Panc1 (cell line): ENCODE measurements at regions of chr11 and their contacts with region 1.

Region 1: DNA sequence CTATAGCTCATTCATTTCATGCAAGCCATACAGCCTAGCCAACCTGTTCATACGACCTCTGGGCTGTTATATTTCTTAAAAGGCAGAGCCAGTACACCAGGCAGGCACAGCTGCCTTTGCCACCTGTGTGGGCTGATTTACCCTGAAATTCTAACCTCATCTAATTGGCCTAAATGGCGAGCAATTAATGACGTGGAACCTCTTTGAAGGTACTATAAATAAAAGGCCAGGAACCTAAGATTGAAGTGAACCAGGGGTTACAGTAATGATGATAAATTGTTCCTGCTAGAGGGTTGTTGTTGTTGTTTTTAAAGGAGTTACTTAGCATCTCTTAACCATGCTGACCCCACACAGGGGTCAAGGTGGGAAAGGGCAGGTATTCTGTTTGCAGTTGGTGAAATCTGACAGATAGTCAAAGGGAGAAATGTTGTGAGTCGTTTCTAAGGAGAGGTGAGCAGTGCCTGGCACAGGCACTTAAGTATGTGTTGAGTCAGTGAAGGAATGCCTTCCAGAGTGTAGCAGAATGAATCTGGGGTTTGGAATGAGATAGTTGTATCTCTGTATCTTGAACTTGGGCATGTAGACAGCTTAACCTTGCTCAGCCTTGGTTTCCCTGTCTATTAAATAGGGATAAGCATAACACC is 213.5 kb upstream of the NAV2 start:
- DNase-seq: no peak
- ATAC-seq: no peak
- H3K4me3 ChIP-seq: no peak overlapping the region
- H3K27ac ChIP-seq: no peak overlapping the region
- H3K4me1 ChIP-seq: no peaks in the 10 kb centered on the region
- H3K27me3 ChIP-seq: peaks cover 6% of the 10 kb centered on the region; the same call in 1 of the 2 replicates
- CTCF ChIP-seq: no peak

Region 2: GRCh38 chr11:19079643-19080440 is 419.3 kb before region 1 on chr11:
- CTCF ChIA-PET with region 1: no interaction called
- POLR2A ChIA-PET with region 1: no interaction called
- in situ Hi-C with region 1: no loop called
- intact Hi-C with region 1: no loop called
- DNase-seq: no peak
- ATAC-seq: no peak
- H3K4me3 ChIP-seq: no peak overlapping the region
- H3K27ac ChIP-seq: no peak overlapping the region
- H3K4me1 ChIP-seq: no peaks in the 10 kb centered on the region; the same call in 1 of the 2 replicates
- H3K27me3 ChIP-seq: peaks cover 8% of the 10 kb centered on the region; the same call in 1 of the 2 replicates
- CTCF ChIP-seq: no peak

Region 3: DNA sequence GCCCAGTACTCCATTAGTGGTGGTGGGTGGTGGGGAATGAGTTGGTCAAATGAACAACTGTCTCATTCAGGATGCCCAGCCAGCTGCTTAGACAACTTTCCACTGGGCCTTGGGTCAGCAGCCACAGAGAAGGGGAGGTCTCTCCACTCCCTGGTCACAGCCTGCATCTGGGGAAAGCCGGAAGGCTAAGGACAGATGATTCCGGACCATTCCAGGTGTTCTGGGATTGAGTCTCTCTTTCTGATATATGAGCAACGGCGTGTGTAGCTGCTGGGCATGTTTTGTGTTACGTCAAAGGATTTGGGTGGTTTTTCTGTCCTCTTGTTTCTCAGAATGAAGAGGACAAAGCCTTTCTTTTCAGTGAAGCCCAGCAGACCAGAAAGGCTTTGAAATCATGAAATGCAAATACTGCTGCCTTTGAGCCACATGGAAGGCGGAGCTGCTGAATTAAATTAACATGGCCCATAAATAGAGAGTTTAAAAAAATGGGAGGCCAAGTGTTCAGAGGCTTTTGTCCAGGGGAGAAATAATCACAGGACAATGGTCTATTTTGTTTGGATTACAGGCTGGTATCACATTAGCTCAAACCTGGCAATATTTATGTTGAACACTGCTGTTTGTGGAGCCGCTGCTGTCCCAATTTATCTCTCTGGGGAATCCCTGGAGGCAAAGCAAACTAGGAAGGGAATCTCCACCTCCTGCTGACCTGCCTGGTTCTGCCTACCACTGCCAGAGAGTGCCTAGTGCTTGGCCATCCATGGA is 24.0 kb before region 1 on chr11:
- CTCF ChIA-PET with region 1: no interaction called
- POLR2A ChIA-PET with region 1: no interaction called
- in situ Hi-C with region 1: no loop called
- intact Hi-C with region 1: loop called (anchors 1 kb)
- DNase-seq: no peak
- ATAC-seq: no peak
- H3K4me3 ChIP-seq: no peak overlapping the region
- H3K27ac ChIP-seq: no peak overlapping the region
- H3K4me1 ChIP-seq: no peaks in the 10 kb centered on the region; the same call in 1 of the 2 replicates
- H3K27me3 ChIP-seq: peaks cover 26% of the 10 kb centered on the region
- CTCF ChIP-seq: no peak